ENCODE measurements at regions of chr5 and their contacts with region 1.

Region 1: GRCh38 chr5:135944967-135945560 is 9.7 kb downstream of the LECT2 start:
- DNase-seq: peak; percentile 63
- H3K27ac ChIP-seq: no peak overlapping the region
- CTCF ChIP-seq: peak; percentile 83

Region 2: DNA sequence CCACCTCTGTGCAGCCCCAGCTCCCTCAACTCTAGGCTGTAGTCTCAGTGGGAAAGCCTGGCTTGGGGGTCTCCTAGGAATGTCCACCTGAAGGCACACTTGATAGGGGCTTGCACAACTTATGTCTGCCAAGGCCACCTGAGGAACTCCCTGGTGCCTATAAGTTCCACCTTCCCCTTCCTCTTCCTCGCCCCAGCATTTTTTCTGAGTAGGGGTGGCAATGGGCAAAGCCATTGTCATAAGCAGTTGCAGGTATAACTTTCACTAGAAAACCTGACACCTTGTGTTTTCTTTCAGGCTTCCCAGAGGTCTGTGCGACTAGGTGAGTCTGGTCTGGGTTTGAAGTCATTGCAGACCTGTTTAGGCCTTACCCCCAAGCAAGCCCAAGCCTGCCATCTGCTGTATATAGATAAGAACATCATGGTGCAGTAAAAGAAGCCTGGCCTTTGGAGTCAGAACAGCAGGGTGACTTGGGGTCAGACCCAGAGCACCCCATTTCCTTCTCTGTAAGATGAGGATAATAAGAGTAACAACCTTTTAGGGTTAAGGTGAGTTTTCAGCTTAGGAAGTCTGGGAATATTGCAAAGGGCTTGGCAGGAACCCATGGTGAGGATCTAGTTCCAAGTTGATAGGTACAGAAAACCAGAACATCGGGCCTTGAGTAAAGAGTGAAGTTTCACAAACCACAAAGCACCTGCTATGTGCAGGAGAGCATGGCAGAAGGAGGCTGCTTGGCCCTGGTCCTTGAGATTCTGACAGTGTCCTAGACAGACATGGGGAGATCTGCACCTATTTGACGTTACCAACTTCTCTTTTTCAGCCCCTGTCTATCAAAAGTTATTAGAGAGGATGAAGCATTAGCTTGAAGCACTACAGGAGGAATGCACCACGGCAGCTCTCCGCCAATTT is 117.6 kb after region 1 on chr5:
- CTCF ChIA-PET with region 1: interaction called, 18 read pairs
- POLR2A ChIA-PET with region 1: no interaction called
- DNase-seq: peak; percentile 59
- H3K27ac ChIP-seq: peak overlapping the region; percentile 53
- CTCF ChIP-seq: no peak; the same call in 1 of the 2 replicates

Region 3: GRCh38 chr5:136155761-136156160 is 210.7 kb after region 1 on chr5:
- CTCF ChIA-PET with region 1: no interaction called
- POLR2A ChIA-PET with region 1: no interaction called
- DNase-seq: no peak
- H3K27ac ChIP-seq: no peak overlapping the region
- CTCF ChIP-seq: no peak

Region 4: DNA sequence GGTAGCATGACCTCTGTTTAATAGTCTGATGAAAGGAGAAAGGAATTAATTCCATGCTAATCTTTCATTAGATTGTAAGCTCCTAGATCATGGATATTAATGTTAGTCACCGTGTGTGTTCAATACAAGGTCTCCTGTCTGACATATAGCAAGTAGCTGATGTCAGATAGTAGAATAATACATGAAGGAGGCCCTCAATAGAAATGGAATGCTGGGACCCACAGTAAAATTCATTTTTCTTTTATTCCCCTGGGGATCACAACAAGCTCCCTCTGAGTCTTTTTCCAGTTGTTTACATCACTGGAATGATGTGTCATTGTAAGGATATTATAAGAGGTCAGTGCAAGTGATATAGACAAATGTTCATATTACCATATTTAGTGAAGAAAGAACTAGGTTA is 660.6 kb after region 1 on chr5:
- CTCF ChIA-PET with region 1: no interaction called
- POLR2A ChIA-PET with region 1: no interaction called
- DNase-seq: no peak
- H3K27ac ChIP-seq: no peak overlapping the region
- CTCF ChIP-seq: no peak